Caki2 (cell line): ENCODE measurements at regions of chr17 and their contacts with region 1.

Region 1: GRCh38 chr17:50269477-50270434 is 4.5 kb upstream of the TMEM92 start:
- DNase-seq: peak; percentile 44

Region 2: GRCh38 chr17:50200457-50201275 is 69.1 kb before region 1 on chr17:
- in situ Hi-C with region 1: loop called (anchors 10 kb)
- DNase-seq: peak; percentile 91